Activated B cell treated with CpG ODN at 0.5 μM for 24 hours (primary cell): ENCODE measurements at regions of chr12 and their contacts with region 1.

Region 1: DNA sequence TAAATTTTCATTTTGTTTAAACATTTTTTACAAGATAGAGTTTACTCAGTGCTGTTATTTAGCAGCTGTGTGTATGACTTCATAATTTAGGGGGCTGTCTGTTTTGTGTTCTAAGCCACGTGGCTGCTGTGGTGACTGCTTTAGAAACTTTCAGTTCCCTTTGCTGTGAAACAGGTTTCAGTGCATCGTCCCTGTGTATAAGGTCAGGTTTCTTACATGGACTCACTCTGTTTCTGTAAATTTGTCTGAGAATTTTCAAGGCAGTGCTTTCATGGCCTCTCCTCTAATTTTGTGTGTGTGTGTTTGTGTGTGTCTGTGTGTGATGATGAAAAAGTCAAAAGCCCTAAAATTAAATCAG is 32.4 kb downstream of the BICD1 start:
- DNase-seq: peak; percentile 27
- ATAC-seq: peak; percentile 83
- H3K4me3 Mint-ChIP-seq: peak overlapping the region; percentile 79
- H3K27ac Mint-ChIP-seq: peak overlapping the region; percentile 96
- H3K4me1 Mint-ChIP-seq: peaks cover 74% of the 10 kb centered on the region
- H3K27me3 Mint-ChIP-seq: no peaks in the 10 kb centered on the region
- CTCF ChIP-seq: no peak

Region 2: DNA sequence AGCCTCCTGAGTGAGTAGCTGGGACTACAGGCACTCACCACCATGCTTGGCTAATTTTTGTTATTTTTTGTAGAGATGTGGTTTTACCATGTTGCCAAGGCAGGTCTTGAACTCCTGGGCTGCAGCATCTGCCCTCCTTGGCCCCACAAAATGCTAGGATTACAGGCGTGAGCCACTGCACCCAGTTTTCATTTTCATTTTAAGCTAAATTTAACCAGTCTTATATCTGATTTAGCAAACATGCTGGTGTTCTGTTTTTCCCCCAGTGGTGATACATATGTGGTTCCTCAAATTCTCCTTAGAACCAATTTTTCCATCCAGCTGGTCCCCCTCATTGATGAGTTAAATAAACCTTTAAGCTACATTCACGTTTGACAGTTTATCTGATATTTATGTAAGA is 76.2 kb before region 1 on chr12:
- CTCF ChIA-PET with region 1: interaction called, 5 read pairs
- POLR2A ChIA-PET with region 1: interaction called, 3 read pairs
- intact Hi-C with region 1: loop called (anchors 1 kb)
- DNase-seq: no peak
- ATAC-seq: no peak
- H3K4me3 Mint-ChIP-seq: no peak overlapping the region
- H3K27ac Mint-ChIP-seq: no peak overlapping the region
- H3K4me1 Mint-ChIP-seq: peaks cover 14% of the 10 kb centered on the region
- H3K27me3 Mint-ChIP-seq: no peaks in the 10 kb centered on the region
- CTCF ChIP-seq: no peak

Region 3: DNA sequence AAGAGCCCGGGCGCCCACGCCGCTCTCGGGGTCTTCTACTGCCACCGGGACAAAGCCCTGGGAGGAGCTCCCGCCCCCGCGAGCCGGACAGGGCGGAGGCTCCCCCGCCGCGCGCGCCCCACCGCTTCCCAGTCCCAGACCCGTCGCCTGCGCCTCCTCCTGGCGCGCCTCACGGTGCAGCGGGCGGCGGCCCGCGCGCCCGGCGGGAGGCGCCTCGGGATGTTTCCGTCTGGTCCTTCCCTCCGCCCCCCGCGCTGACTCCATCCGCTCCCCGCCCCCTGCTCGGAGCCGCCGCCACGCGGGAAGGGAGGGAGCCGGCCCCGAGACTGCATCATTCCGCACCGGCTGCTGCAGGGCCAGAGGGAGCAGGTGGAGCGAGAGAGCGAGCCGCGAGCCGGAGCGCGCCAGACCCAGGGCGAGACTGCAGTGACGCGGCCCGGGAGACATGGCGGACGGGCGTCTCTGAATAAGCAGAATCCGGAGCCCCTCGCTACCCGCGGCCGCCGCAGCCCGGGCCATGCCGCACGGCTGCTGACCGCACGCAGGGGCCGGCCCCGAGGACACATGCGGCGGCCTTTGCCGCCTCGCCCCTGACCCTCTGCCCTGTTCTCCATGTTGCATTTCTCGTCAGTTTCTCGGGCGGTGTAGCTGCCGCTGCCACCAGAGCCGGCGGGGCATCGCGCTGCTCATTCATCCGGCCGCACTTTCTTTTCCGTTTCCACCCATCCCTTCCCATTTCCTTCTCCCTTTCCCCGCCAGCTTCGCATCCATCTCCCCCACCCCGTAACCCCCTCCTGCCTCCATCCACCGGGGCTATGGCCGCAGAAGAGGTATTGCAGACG is 32.3 kb before region 1 on chr12 and contains the start of gene BICD1:
- CTCF ChIA-PET with region 1: interaction called, 3 read pairs
- POLR2A ChIA-PET with region 1: interaction called, 39 read pairs
- intact Hi-C with region 1: loop called (anchors 1 kb)
- DNase-seq: peak; percentile 69
- ATAC-seq: peak; percentile 78
- H3K4me3 Mint-ChIP-seq: peak within 1 kb of the TSS; percentile 95
- H3K27ac Mint-ChIP-seq: peak within 1 kb of the TSS; percentile 95
- H3K4me1 Mint-ChIP-seq: peaks cover 28% of the 10 kb centered on the region
- H3K27me3 Mint-ChIP-seq: no peaks in the 10 kb centered on the region
- CTCF ChIP-seq: no peak
- total RNA-seq, gene BICD1: 55.5 and 67.6 TPM in 2 replicates

Region 4: DNA sequence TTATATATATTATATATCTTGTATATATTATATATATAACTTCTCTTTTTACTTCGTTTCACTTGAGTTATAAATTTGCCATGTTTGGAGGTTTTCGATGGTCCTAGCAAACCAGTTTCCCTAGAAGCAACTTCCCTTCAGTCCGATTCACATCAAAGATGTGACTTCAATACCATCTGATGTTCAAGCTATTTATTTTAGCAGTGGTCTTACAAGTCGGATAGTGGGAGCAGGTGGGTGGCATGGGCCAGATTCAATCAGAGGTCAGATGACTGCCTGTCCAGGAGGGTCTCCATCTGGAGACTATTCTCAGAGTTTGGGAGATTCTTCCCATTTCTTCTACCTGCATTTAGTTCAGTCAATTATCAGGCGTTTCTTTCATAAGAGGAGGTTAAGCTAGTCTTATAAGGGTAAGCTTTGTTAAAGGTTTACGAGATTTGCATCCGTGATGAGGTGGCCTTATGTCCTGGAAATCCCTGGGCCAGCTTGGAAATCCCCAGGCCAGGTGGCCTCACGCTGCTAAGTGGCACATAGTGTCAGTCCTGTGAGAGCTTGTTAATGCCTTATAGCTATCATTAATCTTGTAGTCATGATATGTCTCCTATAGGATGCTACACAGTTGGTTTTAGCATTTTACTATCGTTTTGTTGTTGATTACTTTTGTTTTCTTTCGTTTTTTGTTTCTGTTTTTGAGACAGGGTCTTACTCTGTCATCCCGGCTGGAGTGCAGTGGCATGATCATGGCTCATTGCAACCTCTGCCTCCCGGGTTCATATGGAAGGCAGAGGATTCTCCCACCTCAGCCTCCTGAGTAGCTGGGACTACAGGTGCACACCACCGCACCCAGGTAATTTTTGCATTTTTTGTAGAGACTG is 113.4 kb after region 1 on chr12:
- CTCF ChIA-PET with region 1: no interaction called
- POLR2A ChIA-PET with region 1: interaction called, 4 read pairs
- intact Hi-C with region 1: loop called (anchors 1 kb)
- DNase-seq: no peak
- ATAC-seq: peak; percentile 94
- H3K4me3 Mint-ChIP-seq: peak overlapping the region; percentile 77
- H3K27ac Mint-ChIP-seq: peak overlapping the region; percentile 87
- H3K4me1 Mint-ChIP-seq: peaks cover 26% of the 10 kb centered on the region
- H3K27me3 Mint-ChIP-seq: no peaks in the 10 kb centered on the region
- CTCF ChIP-seq: no peak

Region 5: GRCh38 chr12:32264961-32265360 is 125.9 kb after region 1 on chr12:
- CTCF ChIA-PET with region 1: no interaction called
- POLR2A ChIA-PET with region 1: interaction called, 12 read pairs
- intact Hi-C with region 1: loop called (anchors 2 kb)
- DNase-seq: peak; percentile 31
- ATAC-seq: peak; percentile 67
- H3K4me3 Mint-ChIP-seq: peak overlapping the region; percentile 52
- H3K27ac Mint-ChIP-seq: peak overlapping the region; percentile 97
- H3K4me1 Mint-ChIP-seq: peaks cover 43% of the 10 kb centered on the region
- H3K27me3 Mint-ChIP-seq: no peaks in the 10 kb centered on the region
- CTCF ChIP-seq: no peak

Region 6: GRCh38 chr12:32273712-32274111 is 134.7 kb after region 1 on chr12:
- CTCF ChIA-PET with region 1: interaction called, 4 read pairs
- POLR2A ChIA-PET with region 1: interaction called, 9 read pairs
- intact Hi-C with region 1: loop called (anchors 2 kb)
- DNase-seq: peak; percentile 47
- ATAC-seq: peak; percentile 96
- H3K4me3 Mint-ChIP-seq: peak overlapping the region; percentile 77
- H3K27ac Mint-ChIP-seq: peak overlapping the region; percentile 99
- H3K4me1 Mint-ChIP-seq: peaks cover 39% of the 10 kb centered on the region
- H3K27me3 Mint-ChIP-seq: no peaks in the 10 kb centered on the region
- CTCF ChIP-seq: no peak

Region 7: GRCh38 chr12:32344047-32344446 is 205.0 kb after region 1 on chr12:
- CTCF ChIA-PET with region 1: no interaction called
- POLR2A ChIA-PET with region 1: no interaction called
- intact Hi-C with region 1: no loop called
- DNase-seq: no peak
- ATAC-seq: no peak
- H3K4me3 Mint-ChIP-seq: no peak overlapping the region
- H3K27ac Mint-ChIP-seq: no peak overlapping the region
- H3K4me1 Mint-ChIP-seq: no peaks in the 10 kb centered on the region
- H3K27me3 Mint-ChIP-seq: no peaks in the 10 kb centered on the region
- CTCF ChIP-seq: no peak